ENCODE measurements at regions of chr11 and their contacts with region 1.

Region 1: DNA sequence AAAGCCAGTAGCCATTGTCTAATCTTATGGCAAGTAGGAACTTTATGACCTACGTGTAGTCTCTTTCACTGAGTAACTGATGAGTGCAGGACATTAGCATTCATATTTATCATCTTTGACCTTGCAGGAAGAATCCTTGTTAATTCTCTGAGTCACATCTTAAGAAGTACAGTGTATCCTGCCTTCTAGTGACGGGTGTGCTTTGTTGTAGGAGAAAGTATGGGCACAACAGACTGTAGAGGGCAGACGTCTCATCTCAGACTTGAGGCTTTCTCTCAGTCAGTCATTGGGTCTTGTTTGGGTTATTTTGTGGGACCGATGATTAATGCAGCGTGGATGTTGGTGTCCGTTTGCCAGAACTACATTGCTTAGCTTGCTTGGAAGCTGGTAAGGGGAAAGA is 6.8 kb downstream of the RNF214 start:
- DNase-seq: no peak
- ATAC-seq: no peak

Region 2: DNA sequence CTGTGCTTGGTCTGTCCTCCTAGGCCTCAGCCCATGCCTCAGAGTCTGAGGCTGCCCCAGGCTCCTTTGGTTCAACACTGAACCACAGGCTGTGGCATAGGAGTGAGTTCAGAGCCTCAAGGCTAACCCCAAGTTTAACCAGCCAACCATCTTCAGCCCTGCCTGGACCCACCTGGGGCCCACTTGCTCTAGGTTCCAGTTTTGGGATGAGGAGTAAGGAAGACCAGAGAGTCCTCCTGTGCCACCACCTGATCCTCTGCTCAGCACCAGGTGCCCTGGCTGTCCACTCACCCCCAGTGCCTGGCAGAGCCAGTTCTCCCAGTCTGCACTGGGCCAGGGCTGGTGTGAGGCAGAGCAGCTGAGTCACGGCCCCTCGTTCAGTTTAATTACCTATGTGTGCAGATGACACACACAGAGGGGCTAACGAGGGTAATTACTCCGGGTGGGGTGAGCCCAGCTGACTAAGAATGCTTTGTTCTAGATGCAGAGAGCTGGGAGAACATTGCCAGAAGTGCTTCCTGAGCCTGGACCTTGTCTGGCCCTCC is 701.9 kb after region 1 on chr11:
- intact Hi-C with region 1: loop called (anchors 5 kb)
- DNase-seq: no peak
- ATAC-seq: no peak